AG04449 (cell line): ENCODE measurements at regions of chr22 and their contacts with region 1.

Region 1: DNA sequence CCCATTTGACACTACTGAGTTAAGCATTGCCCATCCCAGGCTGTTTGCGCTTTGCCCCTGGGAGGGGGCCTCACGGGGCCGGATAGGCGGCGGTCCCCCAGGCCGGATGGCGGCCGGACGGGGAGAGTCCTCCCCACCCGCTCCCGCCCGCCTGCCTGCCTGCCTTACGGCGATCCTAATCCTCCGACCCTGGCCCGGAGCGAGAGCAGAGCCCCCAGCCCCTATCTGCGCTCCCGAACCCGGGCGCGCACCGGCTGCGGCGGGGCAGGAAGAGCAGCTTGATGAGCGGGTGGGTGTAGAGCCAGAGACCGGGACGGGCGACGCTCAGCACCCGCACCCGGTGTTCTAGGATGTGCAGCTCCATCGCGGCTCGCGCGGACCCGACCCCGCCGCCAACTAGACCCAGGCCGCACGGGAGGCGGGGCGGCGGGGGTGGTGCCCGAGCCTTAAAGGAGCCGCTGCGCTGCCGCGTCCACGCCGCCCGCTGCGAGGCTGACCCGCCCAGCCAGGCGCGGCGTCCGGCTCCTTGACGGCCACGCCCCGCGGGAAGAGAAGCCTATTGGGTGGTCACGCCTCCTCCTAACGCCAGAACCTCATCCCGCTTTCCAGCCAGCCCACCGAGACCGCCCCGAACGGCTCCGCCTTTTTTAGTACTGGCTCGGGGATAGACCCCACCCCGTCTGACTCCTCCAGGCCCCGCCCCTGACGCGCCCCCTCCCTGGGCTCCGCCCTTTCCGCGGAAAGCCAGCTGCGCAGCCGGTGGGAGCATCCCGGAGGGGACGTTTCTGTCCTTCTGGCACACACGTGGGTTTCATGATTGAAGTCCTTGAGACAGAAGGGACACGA is at the start of gene CASTOR1:
- DNase-seq: peak; percentile 83
- H3K4me3 ChIP-seq: peak within 1 kb of the TSS; percentile 81
- CTCF ChIP-seq: no peak

Region 2: GRCh38 chr22:30104501-30105156 is 184.7 kb before region 1 on chr22:
- CTCF ChIA-PET with region 1: interaction called, 54 read pairs
- POLR2A ChIA-PET with region 1: no interaction called
- DNase-seq: no peak
- H3K4me3 ChIP-seq: no peak overlapping the region
- CTCF ChIP-seq: no peak

Region 3: DNA sequence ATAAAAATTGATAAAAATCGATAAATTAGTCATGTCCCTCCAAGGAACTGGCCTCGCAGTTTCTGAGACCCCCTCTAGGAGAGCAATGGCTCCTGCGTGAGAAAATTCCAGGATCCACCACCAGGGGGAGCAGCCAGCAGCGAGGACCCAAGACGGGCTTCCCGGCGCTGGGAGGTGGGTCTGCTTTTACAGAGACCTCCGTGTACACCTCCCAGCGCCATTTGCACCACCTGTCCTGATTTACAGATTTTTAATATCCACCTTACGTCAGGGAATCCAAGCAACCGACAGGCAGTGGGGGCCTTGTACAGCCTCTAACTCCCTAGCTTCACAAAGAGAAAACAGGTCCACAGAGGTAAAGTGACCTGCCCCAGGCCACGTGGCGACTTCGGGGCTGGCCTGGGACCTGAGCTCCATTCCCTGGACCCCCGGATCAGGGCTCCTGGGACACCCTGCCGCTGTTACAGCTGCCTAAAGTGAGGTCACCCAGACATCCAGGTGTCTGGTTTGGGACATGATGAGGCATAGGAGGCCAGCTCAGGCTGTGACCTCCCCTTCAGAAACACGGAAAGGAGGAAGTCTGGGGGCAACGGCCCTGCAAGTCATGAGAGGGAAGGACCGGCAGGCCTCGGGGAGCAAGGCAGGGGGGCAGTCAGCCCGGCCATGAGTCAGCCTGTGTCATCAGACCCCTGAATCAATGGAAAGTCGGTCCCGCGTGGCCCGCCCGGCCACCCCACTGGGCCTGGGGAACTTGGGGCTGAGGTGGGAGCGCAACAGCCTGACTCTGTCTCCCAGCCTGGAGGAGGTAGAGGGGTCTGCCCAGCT is 26.2 kb before region 1 on chr22:
- CTCF ChIA-PET with region 1: interaction called, 14 read pairs
- POLR2A ChIA-PET with region 1: no interaction called
- DNase-seq: no peak
- H3K4me3 ChIP-seq: peak overlapping the region; percentile 12
- CTCF ChIP-seq: peak; percentile 93

Region 4: GRCh38 chr22:30310881-30311771 is 21.8 kb after region 1 on chr22:
- CTCF ChIA-PET with region 1: interaction called, 25 read pairs
- POLR2A ChIA-PET with region 1: interaction called, 4 read pairs
- DNase-seq: no peak
- H3K4me3 ChIP-seq: no peak overlapping the region
- CTCF ChIP-seq: no peak

Region 5: GRCh38 chr22:30356449-30357235 is 67.3 kb after region 1 on chr22 and contains the starts of genes CCDC157 and SF3A1:
- CTCF ChIA-PET with region 1: interaction called, 12 read pairs
- POLR2A ChIA-PET with region 1: interaction called, 4 read pairs
- DNase-seq: peak; percentile 45
- H3K4me3 ChIP-seq: peak within 1 kb of the TSS; percentile 84
- CTCF ChIP-seq: no peak

Region 6: GRCh38 chr22:30386960-30387827 is 97.8 kb after region 1 on chr22 and contains the start of gene RNF215:
- CTCF ChIA-PET with region 1: interaction called, 235 read pairs
- POLR2A ChIA-PET with region 1: interaction called, 6 read pairs
- DNase-seq: no peak
- H3K4me3 ChIP-seq: peak within 1 kb of the TSS; percentile 73
- CTCF ChIP-seq: peak; percentile 91

Region 7: GRCh38 chr22:30485362-30485988 is 196.1 kb after region 1 on chr22:
- CTCF ChIA-PET with region 1: interaction called, 24 read pairs
- POLR2A ChIA-PET with region 1: interaction called, 3 read pairs
- DNase-seq: no peak
- H3K4me3 ChIP-seq: no peak overlapping the region
- CTCF ChIP-seq: peak; percentile 97